ENCODE measurements at regions of chr2 and their contacts with region 1.

Region 1: DNA sequence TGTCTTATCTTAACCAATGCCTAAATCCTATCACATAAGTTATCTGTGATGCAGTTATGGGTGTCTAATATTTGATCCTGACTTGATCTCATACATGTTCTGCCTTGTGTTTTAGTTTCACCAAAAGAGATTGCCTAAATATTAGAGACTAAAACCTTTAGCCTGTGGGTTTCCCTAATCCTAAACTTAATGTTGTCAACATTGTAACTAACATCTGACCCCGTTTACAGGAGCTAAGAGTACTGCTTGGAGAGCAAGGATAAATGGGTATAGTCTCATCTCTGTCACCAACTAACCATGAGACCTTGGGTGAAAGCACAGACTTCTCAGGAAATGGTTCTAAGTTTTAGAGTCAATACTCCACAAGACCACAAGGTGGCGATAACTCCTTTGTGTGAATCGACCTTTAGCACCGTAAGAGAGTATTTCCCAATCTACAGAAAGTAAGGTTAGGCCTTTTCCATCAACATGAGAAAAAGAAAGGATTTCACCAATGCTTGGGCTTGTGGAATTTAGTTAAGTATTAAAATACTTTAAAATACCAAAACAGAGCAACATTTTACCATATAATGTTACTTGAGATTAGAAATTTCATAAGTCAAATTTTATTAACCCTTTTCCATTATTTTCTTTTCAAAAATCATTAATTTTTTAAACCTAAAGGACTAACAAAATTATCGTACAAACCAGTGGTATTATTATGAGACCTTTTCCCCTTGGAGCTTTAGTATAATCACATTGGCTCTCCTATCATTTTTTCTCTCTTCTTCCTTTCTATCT is 60.5 kb downstream of the G6PC2 start:
- DNase-seq: peak; percentile 84
- ATAC-seq: peak; percentile 96
- H3K4me3 ChIP-seq: no peak overlapping the region
- H3K27ac ChIP-seq: no peak overlapping the region
- H3K4me1 ChIP-seq: no peaks in the 10 kb centered on the region
- H3K27me3 ChIP-seq: no peaks in the 10 kb centered on the region
- CTCF ChIP-seq: peak; percentile 90
- EP300 ChIP-seq: peak in 1 of 2 experiments; percentile 41; a peak in 2 of 4 replicates
- POLR2A ChIP-seq: no peak
- RAD21 ChIP-seq: peak; percentile 67

Region 2: DNA sequence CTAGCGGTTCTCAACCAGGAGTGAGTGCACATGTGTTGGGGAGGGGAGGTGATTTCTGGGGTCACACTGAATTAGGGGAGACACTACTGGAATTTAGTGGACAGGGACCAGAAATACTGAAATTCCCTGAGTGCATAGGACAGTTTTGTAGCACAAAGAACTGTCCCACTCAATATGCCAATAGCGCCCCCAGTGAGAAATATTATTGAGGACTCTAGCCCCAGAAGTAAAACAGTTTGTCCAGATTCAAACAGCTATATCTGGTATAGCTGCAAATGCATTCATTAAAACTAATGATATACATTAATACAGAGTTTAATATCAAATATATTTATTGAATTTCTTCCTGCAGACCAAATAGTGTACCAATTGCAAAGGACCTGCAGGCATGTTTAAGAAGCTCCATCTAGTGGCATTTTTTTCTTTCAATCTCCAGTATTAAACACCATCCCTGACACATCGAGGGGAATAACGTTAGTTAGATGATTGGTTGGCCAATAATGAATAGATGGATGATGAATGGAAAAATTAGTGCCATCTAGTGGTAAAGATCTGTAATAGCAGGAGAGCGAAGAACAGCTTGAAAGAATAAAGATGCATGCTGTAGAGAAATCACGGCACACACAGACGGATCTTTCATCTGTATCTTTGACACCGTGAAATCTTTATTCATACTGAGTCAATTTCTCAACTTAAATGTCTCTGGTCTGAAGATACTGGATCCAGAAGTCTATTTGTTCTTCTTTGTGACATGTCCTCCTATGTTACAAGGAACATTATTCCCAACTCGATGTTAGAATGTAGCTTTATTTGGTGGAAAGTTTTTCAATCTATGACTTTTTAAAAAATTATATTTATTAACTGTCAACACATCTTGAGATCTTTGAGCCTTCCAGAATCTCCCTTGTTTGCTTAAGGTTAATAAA is 170.2 kb after region 1 on chr2:
- CTCF ChIA-PET with region 1: interaction called, 8 read pairs
- POLR2A ChIA-PET with region 1: no interaction called
- in situ Hi-C with region 1: no loop called
- intact Hi-C with region 1: loop called (anchors 1 kb)
- DNase-seq: peak; percentile 40
- ATAC-seq: peak; percentile 59
- H3K4me3 ChIP-seq: no peak overlapping the region
- H3K27ac ChIP-seq: no peak overlapping the region
- H3K4me1 ChIP-seq: no peaks in the 10 kb centered on the region
- H3K27me3 ChIP-seq: peaks cover 0 to 11% of the 10 kb centered on the region in 2 experiments; a peak in 3 of 5 replicates
- CTCF ChIP-seq: peak; percentile 79
- EP300 ChIP-seq: no peak
- POLR2A ChIP-seq: no peak
- RAD21 ChIP-seq: no peak

Region 3: GRCh38 chr2:169141713-169142352 is 180.2 kb after region 1 on chr2:
- CTCF ChIA-PET with region 1: no interaction called
- POLR2A ChIA-PET with region 1: no interaction called
- in situ Hi-C with region 1: loop called (anchors 10 kb)
- intact Hi-C with region 1: loop called (anchors 2 kb)
- DNase-seq: peak; percentile 46
- ATAC-seq: peak; percentile 92
- H3K4me3 ChIP-seq: no peak overlapping the region
- H3K27ac ChIP-seq: no peak overlapping the region
- H3K4me1 ChIP-seq: no peaks in the 10 kb centered on the region
- H3K27me3 ChIP-seq: peaks cover 3 to 20% of the 10 kb centered on the region in 2 experiments; a peak in 4 of 5 replicates
- CTCF ChIP-seq: peak; percentile 84
- EP300 ChIP-seq: no peak
- POLR2A ChIP-seq: no peak
- RAD21 ChIP-seq: 0 out of 2 replicates have a peak, but pooled peaks have one; percentile 13

Region 4: GRCh38 chr2:169397697-169398096 is 436.1 kb after region 1 on chr2:
- CTCF ChIA-PET with region 1: no interaction called
- POLR2A ChIA-PET with region 1: no interaction called
- in situ Hi-C with region 1: no loop called
- intact Hi-C with region 1: loop called (anchors 1 kb)
- DNase-seq: no peak
- ATAC-seq: no peak
- H3K4me3 ChIP-seq: no peak overlapping the region
- H3K27ac ChIP-seq: no peak overlapping the region
- H3K4me1 ChIP-seq: no peaks in the 10 kb centered on the region
- H3K27me3 ChIP-seq: peaks cover 0 to 28% of the 10 kb centered on the region in 2 experiments; a peak in 3 of 5 replicates
- CTCF ChIP-seq: peak; percentile 46
- EP300 ChIP-seq: no peak
- POLR2A ChIP-seq: no peak
- RAD21 ChIP-seq: no peak

Measured in HepG2 (cell line).